Right ventricle myocardium inferior (tissue), 1 donor: ENCODE measurements at regions of chr15 and their contacts with region 1.

Region 1: GRCh38 chr15:41774062-41774881 is at the start of gene MAPKBP1:
- DNase-seq: peak; percentile 99
- ATAC-seq: peak; percentile 97
- total RNA-seq, gene MAPKBP1: 14.4 TPM

Region 2: DNA sequence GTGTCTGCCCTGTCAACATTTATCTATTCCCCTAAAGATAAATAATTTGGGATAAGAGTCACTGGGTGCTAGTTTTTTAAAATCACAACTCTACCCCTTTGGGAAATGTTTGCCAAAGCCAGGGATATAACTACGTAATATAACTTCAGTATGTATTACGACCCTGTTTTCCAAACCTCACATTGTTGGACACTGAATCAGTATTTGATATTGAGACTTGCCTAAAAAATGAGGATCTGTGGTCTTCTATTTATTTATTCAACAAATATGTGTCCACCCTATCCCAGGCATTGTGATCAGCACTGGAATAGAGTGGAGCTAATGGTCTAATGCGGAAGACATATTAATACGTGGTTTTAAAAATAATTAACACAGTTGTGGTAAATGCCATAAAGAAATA is 118.6 kb before region 1 on chr15:
- intact Hi-C with region 1: no loop called
- DNase-seq: no peak
- ATAC-seq: no peak

Region 3: DNA sequence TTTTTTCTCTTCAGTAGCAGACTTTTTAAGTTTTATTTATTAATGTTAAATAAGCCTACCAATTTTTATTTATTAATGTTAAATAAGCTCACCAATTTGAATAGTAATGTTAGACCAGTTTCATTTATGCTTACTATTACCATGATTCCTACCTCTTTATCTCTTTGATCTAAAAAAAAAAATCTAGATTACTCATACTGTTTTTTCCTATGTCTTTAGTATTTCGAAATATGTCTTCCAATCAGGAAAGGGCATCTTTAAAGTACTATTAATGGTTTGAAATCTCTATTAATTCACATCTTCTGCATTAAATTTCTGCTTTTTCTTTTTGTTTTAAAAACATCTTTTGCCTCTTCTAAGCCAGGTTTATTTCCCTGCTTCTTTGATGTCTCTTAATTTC is 27.5 kb before region 1 on chr15:
- intact Hi-C with region 1: no loop called
- DNase-seq: no peak
- ATAC-seq: no peak

Region 4: DNA sequence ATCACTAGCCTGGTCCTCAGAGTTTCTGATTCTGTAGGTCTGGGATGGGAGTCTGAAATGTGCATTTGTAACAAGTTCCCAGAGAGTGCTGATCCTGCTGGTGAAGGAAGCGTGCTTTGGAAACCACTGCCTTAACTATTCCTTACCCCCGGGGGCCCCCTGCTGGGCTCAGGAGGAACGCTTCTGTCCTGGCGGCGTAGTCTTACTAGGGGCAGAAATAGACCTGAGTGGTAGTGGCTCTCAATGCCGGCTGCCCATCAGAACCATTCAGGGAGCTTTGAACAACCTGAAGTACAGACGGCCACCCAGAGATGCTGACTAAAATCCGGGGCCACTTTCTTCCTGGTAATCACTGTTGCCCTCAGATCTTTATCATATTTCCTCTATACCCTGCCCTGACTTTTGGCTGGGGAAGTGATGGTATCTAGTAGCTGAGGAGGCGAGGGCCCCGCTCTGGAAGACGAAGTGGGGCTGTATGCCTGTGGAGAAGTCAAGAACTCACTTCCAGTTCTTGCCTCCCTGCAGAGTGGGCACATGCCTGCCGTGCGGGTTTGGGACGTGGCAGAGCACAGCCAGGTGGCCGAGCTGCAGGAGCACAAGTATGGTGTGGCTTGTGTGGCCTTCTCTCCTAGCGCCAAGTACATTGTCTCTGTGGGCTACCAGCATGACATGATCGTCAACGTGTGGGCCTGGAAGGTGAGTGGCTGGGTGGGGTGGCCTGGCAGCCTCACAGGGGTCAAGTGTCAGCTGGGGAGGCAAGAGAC is 37.3 kb after region 1 on chr15:
- intact Hi-C with region 1: loop called (anchors 1 kb)
- DNase-seq: peak; percentile 88
- ATAC-seq: peak; percentile 91

Region 5: GRCh38 chr15:41904541-41905005 is 130.3 kb after region 1 on chr15:
- intact Hi-C with region 1: loop called (anchors 1 kb)
- DNase-seq: no peak
- ATAC-seq: peak; percentile 67

Region 6: GRCh38 chr15:41972253-41973242 is 198.3 kb after region 1 on chr15 and contains the start of gene EHD4:
- intact Hi-C with region 1: loop called (anchors 5 kb)
- DNase-seq: peak; percentile 100
- ATAC-seq: peak; percentile 96
- total RNA-seq, gene EHD4: 55.5 TPM